ENCODE measurements at regions of chr4 and their contacts with region 1.

Region 1: GRCh38 chr4:145501051-145501660 is 19.5 kb downstream of the SMAD1 start:
- DNase-seq: no peak
- ATAC-seq: no peak
- H3K4me3 ChIP-seq: no peak overlapping the region
- H3K27ac ChIP-seq: no peak overlapping the region
- H3K4me1 ChIP-seq: peaks cover 8% of the 10 kb centered on the region
- H3K27me3 ChIP-seq: no peaks in the 10 kb centered on the region
- CTCF ChIP-seq: no peak

Region 2: DNA sequence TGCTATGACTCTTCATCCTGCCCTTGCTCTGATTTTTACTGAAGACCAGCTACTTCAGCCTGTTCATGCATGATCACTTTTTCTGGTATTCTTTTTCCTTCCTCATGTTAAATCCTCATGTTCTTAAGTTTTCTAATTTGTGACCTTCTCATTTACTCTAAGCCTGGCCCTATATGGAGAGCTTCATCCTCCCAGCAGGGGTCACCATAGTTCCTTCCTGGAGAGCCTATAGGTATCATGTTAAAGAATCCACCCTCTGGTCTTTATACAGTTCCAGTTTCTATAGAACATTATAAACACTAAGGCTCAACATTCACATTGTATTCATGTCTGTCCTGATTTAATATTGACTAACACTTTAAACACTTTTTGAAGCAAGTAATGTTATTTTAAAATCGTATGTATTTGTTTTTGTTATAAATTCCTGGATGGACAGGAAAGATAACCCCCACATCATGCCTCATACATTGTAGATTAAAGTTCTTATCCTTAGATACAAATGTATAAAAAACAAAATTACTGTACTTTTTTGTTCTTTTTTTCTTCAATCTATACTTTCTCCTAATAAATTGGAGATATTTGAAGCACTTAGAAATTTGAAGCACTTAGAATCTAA is 267.0 kb before region 1 on chr4:
- CTCF ChIA-PET with region 1: no interaction called
- POLR2A ChIA-PET with region 1: no interaction called
- intact Hi-C with region 1: loop called (anchors 1 kb)
- DNase-seq: peak; percentile 87
- ATAC-seq: peak; percentile 100
- H3K4me3 ChIP-seq: no peak overlapping the region
- H3K27ac ChIP-seq: no peak overlapping the region
- H3K4me1 ChIP-seq: 0 out of 2 replicates have a peak, but pooled peaks cover 5% of the 10 kb centered on the region
- H3K27me3 ChIP-seq: no peaks in the 10 kb centered on the region
- CTCF ChIP-seq: peak; percentile 98

Region 3: GRCh38 chr4:145602129-145602760 is 101.1 kb after region 1 on chr4:
- CTCF ChIA-PET with region 1: no interaction called
- POLR2A ChIA-PET with region 1: no interaction called
- intact Hi-C with region 1: loop called (anchors 5 kb)
- DNase-seq: peak; percentile 51
- ATAC-seq: peak; percentile 96
- H3K4me3 ChIP-seq: no peak overlapping the region
- H3K27ac ChIP-seq: no peak overlapping the region
- H3K4me1 ChIP-seq: peaks cover 24% of the 10 kb centered on the region
- H3K27me3 ChIP-seq: no peaks in the 10 kb centered on the region
- CTCF ChIP-seq: no peak

Measured in PC-3 (cell line).